ENCODE measurements at regions of chr11 and their contacts with region 1.

Region 1: GRCh38 chr11:122491509-122491908 is 164.0 kb upstream of the UBASH3B start:
- DNase-seq: no peak
- H3K4me3 ChIP-seq: no peak overlapping the region
- CTCF ChIP-seq: no peak
- POLR2A ChIP-seq: no peak

Region 2: GRCh38 chr11:122209619-122210366 is 281.7 kb before region 1 on chr11:
- intact Hi-C with region 1: loop called (anchors 5 kb)
- DNase-seq: peak; percentile 73 to 89
- H3K4me3 ChIP-seq: no peak overlapping the region
- CTCF ChIP-seq: no peak
- POLR2A ChIP-seq: no peak

Region 3: DNA sequence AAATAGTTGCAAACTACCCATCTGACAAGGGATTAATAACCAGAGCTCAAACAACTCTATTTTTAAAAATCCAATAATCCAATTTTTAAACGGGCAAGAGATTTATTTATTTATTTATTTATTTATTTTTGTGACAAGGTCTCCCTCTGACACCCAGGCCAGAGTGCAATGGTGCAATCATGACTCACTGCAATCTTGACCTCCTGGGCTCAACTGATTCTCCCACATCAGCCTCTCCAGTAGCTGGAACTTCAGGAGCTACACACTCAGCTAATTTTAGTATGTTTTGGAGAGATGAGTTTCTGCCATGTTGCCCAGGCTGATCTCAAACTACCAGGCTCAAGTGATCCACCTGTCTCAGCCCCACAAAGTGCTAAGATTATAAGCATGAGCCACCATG is 108.3 kb before region 1 on chr11:
- intact Hi-C with region 1: no loop called
- DNase-seq: no peak
- H3K4me3 ChIP-seq: no peak overlapping the region
- CTCF ChIP-seq: no peak
- POLR2A ChIP-seq: no peak

Region 4: GRCh38 chr11:122451911-122452310 is 39.6 kb before region 1 on chr11:
- intact Hi-C with region 1: loop called (anchors 2 kb)
- DNase-seq: no peak
- H3K4me3 ChIP-seq: no peak overlapping the region
- CTCF ChIP-seq: no peak
- POLR2A ChIP-seq: no peak

Region 5: GRCh38 chr11:122758974-122759373 is 267.5 kb after region 1 on chr11:
- intact Hi-C with region 1: no loop called
- DNase-seq: no peak
- H3K4me3 ChIP-seq: no peak overlapping the region
- CTCF ChIP-seq: no peak
- POLR2A ChIP-seq: no peak

Region 6: GRCh38 chr11:123822032-123822431 is 1330.5 kb after region 1 on chr11:
- intact Hi-C with region 1: no loop called
- DNase-seq: no peak
- H3K4me3 ChIP-seq: no peak overlapping the region
- CTCF ChIP-seq: no peak
- POLR2A ChIP-seq: no peak

Measured in lower leg skin (tissue), 4 donors.